ENCODE measurements at regions of chr11 and their contacts with region 1.

Region 1: DNA sequence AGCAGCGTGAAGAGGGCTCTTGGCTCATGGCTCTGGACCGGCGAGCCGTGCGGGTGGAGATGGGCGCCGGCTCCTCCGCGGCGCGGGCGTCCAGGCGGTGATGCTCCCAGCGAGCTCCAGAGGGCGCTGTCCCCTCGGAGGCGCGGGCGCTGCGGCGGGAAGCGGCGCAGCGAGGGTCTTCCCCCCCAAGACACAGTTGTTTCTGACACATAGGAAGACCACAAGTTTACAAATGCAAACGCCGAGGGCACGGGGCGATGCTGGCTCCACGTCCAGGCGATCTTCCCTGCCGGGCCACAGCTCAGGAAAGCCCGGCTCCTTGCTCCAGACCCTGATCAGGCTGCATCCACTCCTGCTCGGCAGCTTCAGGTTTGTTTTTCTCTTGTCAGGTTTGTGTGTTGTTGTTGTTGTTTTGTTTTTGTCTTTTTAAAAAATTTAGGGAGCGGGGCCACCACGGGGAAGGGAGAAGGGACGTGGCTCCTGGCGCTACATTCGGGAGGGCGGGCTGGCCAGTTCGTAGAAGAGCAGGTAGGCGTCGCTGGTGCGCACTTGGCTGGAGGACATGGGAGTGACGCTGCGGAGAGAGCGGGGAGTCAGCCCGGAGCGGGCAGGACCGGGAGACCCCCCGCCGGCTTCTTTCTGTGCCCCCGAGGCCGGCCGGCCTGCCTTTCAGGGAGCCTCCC is 10.0 kb upstream of the MFRP start:
- DNase-seq: peak; percentile 78 to 94 (median 88)
- ATAC-seq: peak; percentile 92
- H3K4me3 ChIP-seq: peak overlapping the region; percentile 49
- H3K27ac ChIP-seq: peak overlapping the region; percentile 62 to 71
- H3K4me1 ChIP-seq: peaks cover 0 to 18% of the 10 kb centered on the region in 2 donors
- H3K27me3 ChIP-seq: peaks cover 0 to 23% of the 10 kb centered on the region in 2 donors
- CTCF ChIP-seq: peak; percentile 87 to 92

Region 2: DNA sequence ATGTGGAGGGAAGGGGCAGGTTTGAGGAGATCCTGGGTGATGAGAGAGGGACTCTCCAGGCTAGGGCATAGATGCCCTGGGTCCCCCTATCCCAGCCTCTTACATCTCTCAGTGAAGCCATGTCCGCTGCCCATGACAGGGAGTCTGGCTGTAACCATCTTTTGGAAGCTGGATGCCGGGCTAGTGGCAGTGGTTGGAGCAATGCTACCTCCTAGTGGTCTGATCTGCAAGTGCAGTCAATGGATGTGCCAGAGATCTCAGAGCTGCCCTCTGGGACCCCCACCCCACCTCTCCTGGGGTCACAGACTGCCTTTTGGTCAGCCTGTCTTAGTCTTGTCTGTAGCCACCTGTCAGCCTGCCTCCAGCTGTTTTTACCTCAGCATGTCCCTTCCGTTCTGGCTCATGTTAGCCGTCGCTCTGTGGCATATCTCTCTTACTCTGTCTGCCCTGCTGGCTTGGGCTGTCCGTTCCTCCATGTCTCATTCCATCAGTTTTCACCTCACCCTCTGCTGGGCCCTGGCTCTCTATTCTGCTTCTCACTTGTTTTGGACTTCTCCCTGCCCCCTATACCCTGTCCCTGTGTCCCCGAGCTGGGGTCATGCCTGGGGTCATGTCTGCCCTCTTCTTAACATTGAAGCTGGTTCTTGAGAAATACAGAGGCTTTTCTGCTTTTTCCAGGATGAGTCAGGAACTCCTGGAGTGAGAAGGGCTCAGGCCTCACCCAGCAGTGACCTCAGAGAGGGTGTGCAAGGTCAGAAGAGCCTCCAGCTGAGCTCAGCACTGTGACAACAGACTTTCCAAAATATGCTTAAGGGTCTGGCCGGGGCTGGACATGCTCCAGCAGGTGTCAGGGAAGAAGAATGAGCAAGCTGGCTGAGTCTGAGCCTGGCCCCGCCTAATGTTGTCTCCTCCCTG is 118.4 kb after region 1 on chr11:
- intact Hi-C with region 1: loop called in 1 of 2 experiments (anchors 5 kb)
- DNase-seq: peak in 3 of 4 donors; percentile 51 to 79 (median 53)
- ATAC-seq: peak; percentile 86
- H3K4me3 ChIP-seq: no peak overlapping the region
- H3K27ac ChIP-seq: no peak overlapping the region
- H3K4me1 ChIP-seq: no peaks in the 10 kb centered on the region
- H3K27me3 ChIP-seq: peaks cover 0 to 13% of the 10 kb centered on the region in 2 donors
- CTCF ChIP-seq: peak; percentile 85 to 90